GM12878 (cell line): ENCODE measurements at regions of chr15 and their contacts with region 1.

Region 1: DNA sequence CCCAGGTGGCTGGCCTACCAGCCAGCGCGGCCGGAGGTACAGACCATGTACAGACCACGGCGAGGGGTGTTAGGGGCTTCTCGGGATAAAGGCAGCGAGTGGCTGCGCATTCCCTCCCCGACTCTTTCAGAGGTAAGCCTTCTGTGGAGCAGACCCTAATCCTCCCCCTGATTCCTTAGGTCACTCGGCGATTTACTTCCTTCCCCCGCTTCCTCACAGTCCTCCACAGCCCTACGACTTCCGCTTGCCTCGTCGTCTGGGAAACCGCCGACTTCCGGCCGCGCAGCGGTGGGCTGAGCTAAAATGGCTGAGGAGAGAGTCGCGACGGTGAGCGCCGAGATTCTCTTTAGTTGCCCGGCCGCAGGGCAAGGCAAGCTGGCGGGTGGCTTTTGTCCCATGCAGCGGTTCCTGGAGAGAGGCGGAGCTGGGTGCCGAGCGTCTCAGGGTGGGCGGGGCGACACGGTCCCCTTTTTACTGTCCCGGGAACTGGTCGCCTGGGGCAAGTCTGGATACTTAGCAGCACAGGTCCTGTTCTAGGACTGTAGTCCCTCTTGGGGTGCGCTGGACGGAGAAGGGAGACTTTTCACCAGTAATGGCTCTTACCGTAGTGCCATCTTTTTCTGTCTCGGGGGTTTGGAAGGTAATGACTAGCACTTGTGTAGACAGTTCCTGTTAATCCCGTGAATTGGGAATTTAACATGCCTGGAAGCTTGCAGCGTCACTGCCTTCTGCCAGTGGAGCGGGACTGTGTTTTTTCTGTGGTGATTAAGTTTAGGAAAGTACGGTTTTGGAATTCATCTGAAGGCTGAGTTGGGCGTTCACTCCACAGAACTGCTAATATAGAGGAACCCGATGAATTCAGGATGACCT is at the starts of genes BBS4 and HIGD2B:
- DNase-seq: peak; percentile 70
- ATAC-seq: peak; percentile 99
- H3K4me3 ChIP-seq: peak within 1 kb of the TSS; percentile 84
- H3K27ac ChIP-seq: peak within 1 kb of the TSS; percentile 73
- H3K4me1 ChIP-seq: no peaks in the 10 kb centered on the region
- H3K27me3 ChIP-seq: no peaks in the 10 kb centered on the region
- CTCF ChIP-seq: no peak
- EP300 ChIP-seq: no peak
- POLR2A ChIP-seq: peak; percentile 88
- RAD21 ChIP-seq: no peak
- polyA plus RNA-seq, gene BBS4: 9.5 to 13.7 TPM
- polyA plus RNA-seq, gene HIGD2B: 0.10 TPM in 1 of 2 experiments, not detected in the other

Region 2: DNA sequence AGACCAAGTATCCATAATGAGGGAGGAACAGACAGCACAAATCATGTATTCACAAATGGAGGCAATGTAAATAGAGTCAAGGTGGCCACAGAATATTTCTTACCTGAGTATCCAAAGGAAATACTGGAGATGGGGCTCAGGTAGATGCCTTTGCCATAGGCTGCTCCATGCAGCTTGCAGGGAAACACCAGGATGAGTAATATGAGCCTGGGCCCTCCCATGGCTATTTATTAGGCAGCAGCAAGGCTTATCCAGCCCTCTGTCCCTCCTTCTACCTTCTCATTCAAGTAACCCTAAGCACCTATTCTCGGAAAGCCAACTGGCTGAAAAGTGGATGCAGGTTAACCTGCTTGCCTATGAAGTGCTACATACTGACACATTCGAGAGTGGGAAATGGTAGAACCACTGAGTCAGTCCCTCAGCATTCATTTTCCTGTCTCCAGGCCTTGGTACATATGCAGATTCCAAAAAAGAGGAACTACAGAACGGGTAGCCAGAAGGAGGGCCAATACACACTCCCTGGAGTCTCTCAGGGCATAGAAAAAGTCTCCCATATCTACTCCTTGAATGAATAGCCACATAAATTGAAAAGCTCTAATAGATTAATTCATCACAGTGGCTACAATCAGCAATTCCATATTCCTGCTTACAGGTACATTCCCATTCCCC is 436.9 kb before region 1 on chr15:
- CTCF ChIA-PET with region 1: no interaction called
- POLR2A ChIA-PET with region 1: no interaction called
- RAD21 ChIA-PET with region 1: no interaction called
- SMC1A ChIA-PET with region 1: no interaction called
- in situ Hi-C with region 1: no loop called
- intact Hi-C with region 1: no loop called
- DNase-seq: no peak
- ATAC-seq: no peak
- H3K4me3 ChIP-seq: no peak overlapping the region
- H3K27ac ChIP-seq: no peak overlapping the region
- H3K4me1 ChIP-seq: no peaks in the 10 kb centered on the region
- H3K27me3 ChIP-seq: no peaks in the 10 kb centered on the region
- CTCF ChIP-seq: no peak
- EP300 ChIP-seq: no peak
- POLR2A ChIP-seq: no peak
- RAD21 ChIP-seq: no peak

Region 3: DNA sequence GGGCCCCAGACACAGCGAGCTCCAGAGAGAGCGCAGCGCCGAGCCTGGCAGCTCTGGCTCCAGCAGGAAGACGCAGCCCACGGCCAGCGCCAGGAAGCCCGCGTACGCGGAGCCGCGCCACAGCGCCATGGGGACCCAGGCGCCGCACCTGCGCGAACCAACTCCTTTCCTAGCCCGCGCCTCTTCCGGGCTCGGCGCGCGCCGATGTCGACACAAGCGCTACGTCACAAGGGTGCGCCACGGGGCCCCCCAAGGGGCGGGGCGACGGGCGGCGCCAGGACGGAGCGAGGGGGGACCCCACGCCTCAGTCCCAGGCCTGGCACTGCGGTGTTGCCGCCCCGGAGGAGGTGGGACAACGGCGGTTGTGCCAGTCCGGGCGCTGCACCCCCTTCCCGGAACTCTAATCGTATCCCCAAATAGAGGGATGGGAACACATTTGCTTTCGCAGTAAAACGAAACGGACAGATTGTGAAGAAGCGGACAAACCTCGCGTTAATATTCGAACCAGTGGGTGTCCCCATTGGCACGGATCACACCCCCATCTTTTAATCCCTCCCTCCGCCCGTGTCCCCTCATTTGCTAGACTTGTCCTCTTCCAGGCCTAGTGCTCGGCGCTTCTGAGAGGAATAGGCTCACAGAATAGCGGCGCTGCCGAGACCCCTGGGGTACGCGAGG is 97.5 kb after region 1 on chr15 and contains the start of gene ADPGK:
- CTCF ChIA-PET with region 1: no interaction called
- POLR2A ChIA-PET with region 1: interaction called, 3 read pairs
- RAD21 ChIA-PET with region 1: no interaction called
- SMC1A ChIA-PET with region 1: interaction called, 3 read pairs
- in situ Hi-C with region 1: no loop called
- intact Hi-C with region 1: loop called (anchors 2 kb)
- DNase-seq: peak; percentile 70
- ATAC-seq: peak; percentile 86
- H3K4me3 ChIP-seq: peak within 1 kb of the TSS; percentile 94
- H3K27ac ChIP-seq: peak within 1 kb of the TSS; percentile 93
- H3K4me1 ChIP-seq: peaks cover 31% of the 10 kb centered on the region
- H3K27me3 ChIP-seq: no peaks in the 10 kb centered on the region
- CTCF ChIP-seq: 0 out of 6 replicates have a peak, but pooled peaks of 1 of the 3 experiments have one; percentile 0
- EP300 ChIP-seq: peak in 1 of 2 experiments; percentile 34; a peak in 1 of 4 replicates
- POLR2A ChIP-seq: peak; percentile 98
- RAD21 ChIP-seq: no peak
- polyA plus RNA-seq, gene ADPGK: 13.8 to 18.1 TPM